ENCODE measurements at regions of chr2 and their contacts with region 1.

Region 1: DNA sequence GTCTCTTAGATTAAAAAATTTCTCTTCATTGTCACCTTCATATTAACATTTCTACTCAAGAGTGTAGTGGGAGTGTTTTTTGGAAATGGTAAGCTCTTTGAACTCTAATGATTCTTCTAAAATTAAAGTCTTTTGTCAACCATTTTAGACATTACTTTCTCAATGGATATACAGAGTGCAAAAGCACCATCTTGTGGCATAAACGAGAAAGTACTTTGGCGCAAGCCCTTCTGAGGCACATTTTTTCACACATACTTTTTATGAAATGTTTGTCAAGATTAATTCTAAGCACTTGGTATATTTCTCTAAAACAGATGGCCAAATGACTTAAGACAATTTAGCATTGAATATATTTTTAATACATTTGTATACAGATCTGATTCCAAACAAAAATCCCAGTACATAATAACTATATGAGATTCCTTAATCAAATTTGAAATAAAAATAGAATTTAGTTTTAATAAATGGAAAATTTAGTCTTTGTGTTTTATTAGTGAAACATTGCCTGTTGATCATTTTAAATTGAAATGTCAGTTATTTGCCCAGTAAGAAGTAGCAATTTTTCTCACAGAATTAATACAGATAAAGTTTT is 63.3 kb upstream of the GALNT5 start:
- DNase-seq: no peak
- H3K4me3 ChIP-seq: no peak overlapping the region
- CTCF ChIP-seq: peak; percentile 55

Region 2: GRCh38 chr2:155368934-155369333 is 1825.3 kb before region 1 on chr2:
- CTCF ChIA-PET with region 1: interaction called, 17 read pairs
- POLR2A ChIA-PET with region 1: no interaction called
- DNase-seq: no peak
- H3K4me3 ChIP-seq: no peak overlapping the region
- CTCF ChIP-seq: no peak

Region 3: GRCh38 chr2:156332534-156333273 is 861.5 kb before region 1 on chr2 and contains the start of gene NR4A2:
- CTCF ChIA-PET with region 1: interaction called, 14 read pairs
- POLR2A ChIA-PET with region 1: no interaction called
- DNase-seq: no peak
- H3K4me3 ChIP-seq: peak within 1 kb of the TSS; percentile 74
- CTCF ChIP-seq: no peak

Region 4: DNA sequence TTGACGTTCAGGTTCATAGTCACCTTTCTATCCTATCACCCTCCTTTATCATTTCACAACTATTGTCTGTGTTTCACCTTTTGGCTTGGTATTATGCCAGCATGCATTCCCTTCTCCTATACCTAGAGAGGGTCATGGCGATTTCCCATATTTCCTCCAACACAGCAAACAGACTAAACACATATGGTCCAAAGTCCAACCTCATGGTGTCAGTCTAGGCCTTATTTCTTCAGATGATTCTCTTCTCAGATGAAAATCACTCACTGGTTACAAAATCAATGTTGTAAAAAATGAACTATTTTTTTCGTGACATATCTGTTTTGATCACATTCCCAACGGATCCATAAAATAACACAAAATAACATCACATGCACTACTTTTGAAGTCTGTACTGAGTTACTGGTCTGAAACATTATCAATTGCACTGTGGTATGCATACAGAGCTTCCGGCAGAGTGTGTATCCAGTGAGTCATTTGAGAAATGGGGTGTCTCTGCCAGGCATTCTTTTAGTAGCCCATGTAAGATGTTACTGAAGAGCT is 141.4 kb before region 1 on chr2:
- CTCF ChIA-PET with region 1: interaction called, 12 read pairs
- POLR2A ChIA-PET with region 1: no interaction called
- DNase-seq: peak; percentile 53
- H3K4me3 ChIP-seq: no peak overlapping the region
- CTCF ChIP-seq: no peak

Region 5: DNA sequence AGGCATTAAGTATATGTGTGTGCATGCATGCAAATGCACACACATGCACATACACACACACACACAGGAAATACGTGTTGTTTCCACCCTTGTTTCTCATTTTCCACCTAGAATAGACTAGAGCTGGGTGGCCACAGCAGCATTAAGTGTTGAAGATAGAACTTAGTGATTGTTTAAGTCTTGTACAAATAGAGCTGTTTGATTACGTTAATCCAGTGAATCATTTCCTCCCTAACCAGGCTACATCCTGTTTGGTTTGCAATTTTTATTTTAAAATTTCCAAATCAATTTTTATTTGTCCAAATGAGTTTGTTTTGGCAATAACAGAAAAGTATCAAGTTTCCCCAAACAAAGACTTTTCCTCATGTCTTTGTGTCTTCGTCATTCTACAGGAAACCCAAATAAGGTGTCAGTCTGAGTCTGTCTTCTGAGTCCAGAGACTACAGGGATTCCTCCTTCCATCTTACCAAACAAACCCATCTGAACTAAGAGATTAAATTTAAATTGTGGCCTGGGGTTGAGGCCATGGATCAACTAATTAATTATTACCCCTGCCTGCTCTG is 11.3 kb before region 1 on chr2:
- CTCF ChIA-PET with region 1: interaction called, 13 read pairs
- POLR2A ChIA-PET with region 1: no interaction called
- DNase-seq: peak; percentile 67
- H3K4me3 ChIP-seq: no peak overlapping the region
- CTCF ChIP-seq: no peak

Measured in AG04449 (cell line).